Panc1 (cell line): ENCODE measurements at regions of chr16 and their contacts with region 1.

Region 1: DNA sequence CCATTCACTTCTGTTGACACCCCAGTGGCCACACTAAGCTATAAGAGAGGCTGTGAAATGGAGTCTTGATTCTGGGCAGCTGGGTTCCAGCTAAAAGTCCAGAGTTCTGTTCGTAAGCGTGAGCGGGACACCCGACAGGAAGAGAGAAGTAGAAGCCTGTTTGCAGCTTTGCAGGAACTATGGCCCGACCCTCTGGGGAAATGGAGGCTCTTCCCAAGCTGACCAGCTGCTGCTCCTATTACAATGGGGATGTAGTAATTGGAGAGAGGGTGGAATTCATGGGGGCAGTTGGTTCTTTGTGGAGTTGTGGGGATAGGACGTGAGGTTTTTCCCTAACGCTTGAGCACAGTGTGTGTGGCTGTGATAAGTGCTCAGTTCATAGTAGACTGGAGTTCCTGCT is 28.4 kb downstream of the UBALD1 start:
- DNase-seq: no peak
- ATAC-seq: no peak
- H3K4me3 ChIP-seq: no peak overlapping the region
- H3K27ac ChIP-seq: no peak overlapping the region
- H3K4me1 ChIP-seq: no peaks in the 10 kb centered on the region
- H3K27me3 ChIP-seq: no peaks in the 10 kb centered on the region
- CTCF ChIP-seq: no peak

Region 2: GRCh38 chr16:3400446-3400778 is 1185.9 kb before region 1 on chr16:
- CTCF ChIA-PET with region 1: no interaction called
- POLR2A ChIA-PET with region 1: no interaction called
- in situ Hi-C with region 1: no loop called
- intact Hi-C with region 1: no loop called
- DNase-seq: no peak
- ATAC-seq: no peak
- H3K4me3 ChIP-seq: peak overlapping the region; percentile 82 to 89
- H3K27ac ChIP-seq: peak overlapping the region; percentile 91
- H3K4me1 ChIP-seq: 0 out of 2 replicates have a peak, but pooled peaks cover 3% of the 10 kb centered on the region
- H3K27me3 ChIP-seq: no peaks in the 10 kb centered on the region
- CTCF ChIP-seq: no peak

Region 3: DNA sequence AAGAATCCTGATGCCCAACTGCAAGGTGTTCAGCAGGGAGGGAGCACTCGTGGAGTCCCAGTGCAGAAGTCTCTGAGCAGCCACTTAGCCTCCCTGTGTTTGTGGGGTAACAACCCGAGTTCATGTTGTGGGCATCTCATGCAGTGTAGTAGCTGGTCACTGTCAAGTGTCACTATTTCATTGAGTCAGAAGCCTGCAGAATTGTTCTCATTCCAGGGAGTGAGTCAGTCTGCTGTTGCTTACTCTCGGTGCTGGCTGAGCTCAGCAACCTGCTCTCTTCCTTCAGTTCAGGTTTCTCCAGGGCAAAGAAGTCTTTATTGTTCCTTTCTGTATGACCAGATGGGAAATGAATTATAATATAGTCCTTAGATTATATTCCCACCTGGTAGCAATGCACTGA is 86.0 kb before region 1 on chr16:
- CTCF ChIA-PET with region 1: no interaction called
- POLR2A ChIA-PET with region 1: no interaction called
- in situ Hi-C with region 1: no loop called
- intact Hi-C with region 1: loop called (anchors 5 kb)
- DNase-seq: no peak
- ATAC-seq: peak; percentile 94
- H3K4me3 ChIP-seq: no peak overlapping the region
- H3K27ac ChIP-seq: peak overlapping the region; percentile 45; the same call in 1 of the 2 replicates
- H3K4me1 ChIP-seq: peaks cover 28% of the 10 kb centered on the region
- H3K27me3 ChIP-seq: no peaks in the 10 kb centered on the region
- CTCF ChIP-seq: no peak

Region 4: GRCh38 chr16:4517812-4518680 is 68.2 kb before region 1 on chr16:
- CTCF ChIA-PET with region 1: interaction called, 3 read pairs
- POLR2A ChIA-PET with region 1: no interaction called
- in situ Hi-C with region 1: no loop called
- intact Hi-C with region 1: loop called (anchors 5 kb)
- DNase-seq: no peak
- ATAC-seq: peak; percentile 73
- H3K4me3 ChIP-seq: no peak overlapping the region
- H3K27ac ChIP-seq: no peak overlapping the region
- H3K4me1 ChIP-seq: no peaks in the 10 kb centered on the region
- H3K27me3 ChIP-seq: no peaks in the 10 kb centered on the region
- CTCF ChIP-seq: peak; percentile 86

Region 5: GRCh38 chr16:4561596-4561995 is 24.7 kb before region 1 on chr16:
- CTCF ChIA-PET with region 1: no interaction called
- POLR2A ChIA-PET with region 1: no interaction called
- in situ Hi-C with region 1: no loop called
- intact Hi-C with region 1: no loop called
- DNase-seq: no peak
- ATAC-seq: no peak
- H3K4me3 ChIP-seq: no peak overlapping the region
- H3K27ac ChIP-seq: no peak overlapping the region
- H3K4me1 ChIP-seq: no peaks in the 10 kb centered on the region
- H3K27me3 ChIP-seq: no peaks in the 10 kb centered on the region
- CTCF ChIP-seq: no peak

Region 6: DNA sequence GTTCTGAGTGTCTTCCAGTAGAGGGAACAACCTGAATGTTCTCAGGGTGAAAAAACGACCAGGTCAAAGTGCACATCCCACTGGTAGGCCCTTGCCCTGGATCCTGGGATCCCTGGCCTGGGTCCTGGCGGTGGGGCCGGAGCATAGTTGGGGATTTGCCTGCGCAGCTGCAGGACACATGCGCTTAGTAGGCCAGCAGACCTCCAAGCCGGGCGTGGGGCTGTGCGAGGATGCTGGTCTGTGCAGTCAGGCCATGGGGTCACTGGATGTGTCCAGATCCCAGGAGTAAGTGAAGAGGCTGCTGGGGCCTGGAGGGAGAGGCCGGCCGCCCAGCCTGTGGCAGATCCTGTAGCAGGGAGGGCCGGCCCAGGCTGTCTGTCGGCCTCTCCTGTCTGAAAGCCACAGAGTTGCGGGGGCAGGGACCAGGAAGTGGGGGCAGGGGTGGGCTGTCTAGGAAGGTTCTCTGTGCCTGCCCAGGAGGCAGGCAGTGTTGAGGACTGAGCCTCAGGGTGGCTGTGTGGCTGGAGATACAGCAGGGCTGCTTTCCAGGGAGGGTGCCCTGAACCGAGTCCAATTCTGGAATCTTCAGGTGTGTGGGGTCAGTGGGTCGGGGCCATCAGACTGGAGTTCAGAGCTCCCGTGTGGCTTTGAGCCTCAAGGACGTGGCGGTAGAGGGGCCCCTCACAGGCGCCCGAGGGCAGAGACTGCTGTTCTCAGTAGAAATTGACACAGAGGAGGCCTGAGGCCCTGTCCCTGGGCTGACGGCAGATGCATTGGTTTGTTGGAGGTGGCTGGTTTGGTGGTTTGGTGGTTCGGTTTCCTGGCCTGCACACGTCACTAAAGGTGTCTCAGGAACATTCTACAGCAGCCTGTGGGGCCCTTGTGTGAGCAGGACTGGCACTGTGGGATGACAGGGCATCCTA is 89.8 kb after region 1 on chr16:
- CTCF ChIA-PET with region 1: no interaction called
- POLR2A ChIA-PET with region 1: no interaction called
- in situ Hi-C with region 1: no loop called
- intact Hi-C with region 1: no loop called
- DNase-seq: no peak
- ATAC-seq: peak; percentile 35
- H3K4me3 ChIP-seq: no peak overlapping the region
- H3K27ac ChIP-seq: no peak overlapping the region
- H3K4me1 ChIP-seq: no peaks in the 10 kb centered on the region
- H3K27me3 ChIP-seq: no peaks in the 10 kb centered on the region
- CTCF ChIP-seq: no peak